ENCODE measurements at regions of chr7 and their contacts with region 1.

Region 1: GRCh38 chr7:25098096-25099046 is 26.7 kb downstream of the CYCS start:
- DNase-seq: peak; percentile 74
- ATAC-seq: peak; percentile 80
- H3K4me3 Mint-ChIP-seq: no peak overlapping the region
- H3K27ac Mint-ChIP-seq: no peak overlapping the region
- H3K4me1 Mint-ChIP-seq: peaks cover 11% of the 10 kb centered on the region
- H3K27me3 Mint-ChIP-seq: peaks cover 2% of the 10 kb centered on the region
- CTCF ChIP-seq: peak; percentile 96

Region 2: DNA sequence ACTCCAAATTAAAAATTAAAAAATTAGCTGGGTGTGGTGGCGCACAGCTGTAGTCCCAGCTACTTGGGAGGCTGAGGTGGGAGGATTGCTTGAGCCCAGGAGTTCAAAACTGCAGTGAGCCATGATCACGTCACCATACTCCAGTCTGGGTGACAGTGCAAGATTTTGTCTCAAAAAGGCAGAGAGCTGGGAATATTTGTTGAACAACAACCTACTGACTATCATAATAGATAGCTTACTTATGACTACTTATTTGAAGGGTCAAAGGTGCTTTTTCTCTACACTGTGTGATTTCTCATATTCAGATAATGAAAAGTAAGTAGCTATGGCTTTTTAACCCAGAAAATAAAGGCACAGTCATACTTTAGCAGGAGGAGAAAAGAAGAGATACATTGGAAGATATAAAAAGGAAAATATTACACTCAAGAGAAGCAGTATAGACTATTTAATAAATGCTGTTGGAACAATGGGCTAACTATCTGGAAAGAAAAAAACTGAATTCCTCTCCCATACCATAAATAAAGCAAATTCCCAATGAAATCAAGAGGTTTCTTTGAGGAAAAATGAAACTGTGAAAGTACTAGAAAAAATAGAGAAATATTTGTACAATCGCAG is 347.8 kb before region 1 on chr7:
- CTCF ChIA-PET with region 1: interaction called, 11 read pairs
- POLR2A ChIA-PET with region 1: no interaction called
- intact Hi-C with region 1: no loop called
- DNase-seq: no peak
- ATAC-seq: no peak
- H3K4me3 Mint-ChIP-seq: no peak overlapping the region
- H3K27ac Mint-ChIP-seq: no peak overlapping the region
- H3K4me1 Mint-ChIP-seq: peaks cover 13% of the 10 kb centered on the region
- H3K27me3 Mint-ChIP-seq: peaks cover 30% of the 10 kb centered on the region
- CTCF ChIP-seq: no peak

Region 3: DNA sequence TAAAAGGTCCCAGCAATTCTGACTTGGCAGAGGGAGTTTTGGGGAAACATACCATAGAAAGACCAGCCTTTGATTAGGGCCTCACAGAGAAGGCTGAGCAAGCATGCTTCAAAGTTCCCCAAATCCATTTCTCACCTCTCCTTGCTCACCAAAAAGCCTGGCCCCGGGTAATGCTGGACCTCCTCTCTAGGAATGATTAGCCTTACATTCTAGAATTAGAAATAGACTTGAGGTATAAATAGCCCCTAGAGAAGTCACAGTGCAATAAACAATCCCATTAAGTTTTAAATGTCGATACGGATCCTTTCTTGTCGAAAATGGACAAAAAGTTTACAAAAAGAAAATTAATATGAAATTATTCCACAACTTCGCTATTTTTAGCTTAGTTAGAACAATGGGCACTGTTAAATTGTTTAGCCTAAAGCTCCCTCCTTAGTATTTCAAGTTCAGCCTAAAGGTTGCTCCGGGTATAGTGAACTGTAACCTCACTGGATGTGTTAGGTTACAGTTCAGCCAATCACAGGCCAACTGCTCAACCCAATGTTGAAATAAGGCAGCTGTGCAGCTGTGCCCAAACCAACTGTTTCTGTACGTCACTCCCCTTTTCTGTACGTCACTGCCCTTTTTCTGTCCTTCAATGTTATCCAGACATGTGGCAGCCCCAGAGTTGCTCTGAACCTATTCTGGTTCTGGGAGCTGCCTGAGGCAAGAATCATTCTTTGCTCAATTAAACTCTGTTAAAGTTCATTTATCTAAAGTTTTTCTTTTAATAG is 333.2 kb before region 1 on chr7:
- CTCF ChIA-PET with region 1: interaction called, 11 read pairs
- POLR2A ChIA-PET with region 1: no interaction called
- intact Hi-C with region 1: no loop called
- DNase-seq: no peak
- ATAC-seq: no peak
- H3K4me3 Mint-ChIP-seq: no peak overlapping the region
- H3K27ac Mint-ChIP-seq: no peak overlapping the region
- H3K4me1 Mint-ChIP-seq: peaks cover 6% of the 10 kb centered on the region
- H3K27me3 Mint-ChIP-seq: peaks cover 37% of the 10 kb centered on the region
- CTCF ChIP-seq: no peak

Region 4: DNA sequence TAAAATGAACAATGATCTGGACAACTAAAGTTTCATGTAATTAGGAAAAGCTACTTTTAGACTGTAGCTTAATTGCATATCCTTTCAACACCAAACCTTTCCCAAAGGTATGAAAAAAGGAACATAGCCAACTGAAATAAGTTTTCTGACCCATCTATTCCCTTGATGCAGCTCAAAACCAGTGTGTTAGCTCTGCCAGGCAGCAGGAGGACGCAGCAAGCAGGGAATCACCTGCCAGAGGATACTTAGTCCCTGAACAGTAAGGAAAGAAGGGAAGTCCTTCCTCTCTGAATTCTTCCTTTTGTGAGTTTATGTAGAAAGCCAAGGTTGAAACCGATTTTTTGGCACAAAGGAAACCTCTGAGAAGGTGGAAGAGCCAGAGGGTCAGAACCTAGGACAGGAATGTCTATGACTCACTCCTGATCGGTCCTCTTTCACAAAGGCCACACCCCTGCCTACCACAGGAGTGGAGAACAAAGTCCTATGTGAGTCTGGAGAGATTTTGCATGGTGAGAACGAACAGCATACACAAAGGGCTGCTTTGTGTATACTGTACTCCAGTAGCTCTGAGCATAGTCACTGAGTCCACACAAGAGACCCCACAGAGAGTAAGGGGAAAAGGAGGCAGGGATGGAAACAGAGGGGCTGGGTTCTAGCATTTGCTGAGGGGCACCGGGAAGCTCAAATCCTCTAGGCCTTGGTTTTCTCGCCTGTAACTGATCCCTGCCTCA is 272.3 kb before region 1 on chr7:
- CTCF ChIA-PET with region 1: interaction called, 49 read pairs
- POLR2A ChIA-PET with region 1: interaction called, 5 read pairs
- intact Hi-C with region 1: loop called (anchors 2 kb)
- DNase-seq: peak; percentile 13
- ATAC-seq: peak; percentile 17
- H3K4me3 Mint-ChIP-seq: no peak overlapping the region
- H3K27ac Mint-ChIP-seq: peak overlapping the region; percentile 68
- H3K4me1 Mint-ChIP-seq: peaks cover 64% of the 10 kb centered on the region
- H3K27me3 Mint-ChIP-seq: no peaks in the 10 kb centered on the region
- CTCF ChIP-seq: no peak

Region 5: DNA sequence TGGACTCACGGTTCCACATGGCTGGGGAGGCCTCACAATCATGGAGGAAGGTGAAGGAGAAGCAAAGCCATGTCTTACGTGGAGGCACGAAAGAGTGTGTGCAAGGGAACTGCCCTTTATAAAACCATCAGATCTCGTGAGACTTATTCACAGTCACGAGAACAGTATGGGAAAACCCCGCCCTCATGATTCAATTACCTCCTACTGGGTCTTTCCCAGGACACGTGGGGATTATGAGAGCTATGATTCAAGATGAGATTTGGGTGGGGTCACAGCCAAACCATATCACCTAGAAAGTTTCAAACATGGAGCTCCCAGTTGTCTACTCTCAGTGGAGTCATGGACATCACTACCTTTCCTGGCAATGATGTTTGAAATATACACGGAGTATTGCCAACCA is 22.9 kb before region 1 on chr7:
- CTCF ChIA-PET with region 1: interaction called, 25 read pairs
- POLR2A ChIA-PET with region 1: interaction called, 4 read pairs
- intact Hi-C with region 1: no loop called
- DNase-seq: peak; percentile 56
- ATAC-seq: peak; percentile 71
- H3K4me3 Mint-ChIP-seq: no peak overlapping the region
- H3K27ac Mint-ChIP-seq: no peak overlapping the region
- H3K4me1 Mint-ChIP-seq: peaks cover 14% of the 10 kb centered on the region
- H3K27me3 Mint-ChIP-seq: peaks cover 9% of the 10 kb centered on the region
- CTCF ChIP-seq: no peak

Region 6: DNA sequence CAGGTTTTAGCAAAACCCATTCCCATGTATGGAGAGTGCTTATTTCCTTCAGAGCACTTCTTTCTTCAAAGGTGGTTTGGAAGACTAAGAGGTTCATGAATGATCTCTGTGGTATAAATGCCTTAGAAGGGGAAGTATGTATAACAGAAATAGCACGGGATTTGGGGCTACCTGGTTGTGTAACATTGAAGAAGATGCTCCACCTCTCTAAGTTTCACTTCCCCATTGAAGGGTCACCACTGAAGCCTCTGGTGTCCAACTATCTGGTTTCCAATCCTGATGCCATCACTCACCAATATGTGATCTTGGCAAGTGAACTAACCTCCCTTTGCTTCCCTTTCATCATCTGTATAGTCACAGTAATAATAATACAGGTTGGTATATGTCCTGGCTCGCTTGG is 10.5 kb before region 1 on chr7:
- CTCF ChIA-PET with region 1: interaction called, 24 read pairs
- POLR2A ChIA-PET with region 1: interaction called, 4 read pairs
- intact Hi-C with region 1: no loop called
- DNase-seq: no peak
- ATAC-seq: no peak
- H3K4me3 Mint-ChIP-seq: no peak overlapping the region
- H3K27ac Mint-ChIP-seq: no peak overlapping the region
- H3K4me1 Mint-ChIP-seq: no peaks in the 10 kb centered on the region
- H3K27me3 Mint-ChIP-seq: no peaks in the 10 kb centered on the region
- CTCF ChIP-seq: no peak

Region 7: GRCh38 chr7:25117226-25118047 is 19.1 kb after region 1 on chr7:
- CTCF ChIA-PET with region 1: interaction called, 41 read pairs
- POLR2A ChIA-PET with region 1: interaction called, 3 read pairs
- intact Hi-C with region 1: no loop called
- DNase-seq: peak; percentile 21
- ATAC-seq: peak; percentile 80
- H3K4me3 Mint-ChIP-seq: peak overlapping the region; percentile 17
- H3K27ac Mint-ChIP-seq: peak overlapping the region; percentile 85
- H3K4me1 Mint-ChIP-seq: peaks cover 47% of the 10 kb centered on the region
- H3K27me3 Mint-ChIP-seq: no peaks in the 10 kb centered on the region
- CTCF ChIP-seq: no peak

Region 8: GRCh38 chr7:25611196-25611595 is 512.8 kb after region 1 on chr7:
- CTCF ChIA-PET with region 1: no interaction called
- POLR2A ChIA-PET with region 1: no interaction called
- intact Hi-C with region 1: no loop called
- DNase-seq: no peak
- ATAC-seq: no peak
- H3K4me3 Mint-ChIP-seq: no peak overlapping the region
- H3K27ac Mint-ChIP-seq: no peak overlapping the region
- H3K4me1 Mint-ChIP-seq: peaks cover 16% of the 10 kb centered on the region
- H3K27me3 Mint-ChIP-seq: no peaks in the 10 kb centered on the region
- CTCF ChIP-seq: no peak